ENCODE measurements at regions of chr17 and their contacts with region 1.

Region 1: GRCh38 chr17:48543107-48543853 is 1.6 kb downstream of the HOXB2 start:
- DNase-seq: peak; percentile 69
- H3K4me3 Mint-ChIP-seq: peak overlapping the region; percentile 89
- H3K27ac Mint-ChIP-seq: peak overlapping the region; percentile 95
- H3K4me1 Mint-ChIP-seq: peaks cover 55% of the 10 kb centered on the region
- H3K27me3 Mint-ChIP-seq: peaks cover 32% of the 10 kb centered on the region

Region 2: DNA sequence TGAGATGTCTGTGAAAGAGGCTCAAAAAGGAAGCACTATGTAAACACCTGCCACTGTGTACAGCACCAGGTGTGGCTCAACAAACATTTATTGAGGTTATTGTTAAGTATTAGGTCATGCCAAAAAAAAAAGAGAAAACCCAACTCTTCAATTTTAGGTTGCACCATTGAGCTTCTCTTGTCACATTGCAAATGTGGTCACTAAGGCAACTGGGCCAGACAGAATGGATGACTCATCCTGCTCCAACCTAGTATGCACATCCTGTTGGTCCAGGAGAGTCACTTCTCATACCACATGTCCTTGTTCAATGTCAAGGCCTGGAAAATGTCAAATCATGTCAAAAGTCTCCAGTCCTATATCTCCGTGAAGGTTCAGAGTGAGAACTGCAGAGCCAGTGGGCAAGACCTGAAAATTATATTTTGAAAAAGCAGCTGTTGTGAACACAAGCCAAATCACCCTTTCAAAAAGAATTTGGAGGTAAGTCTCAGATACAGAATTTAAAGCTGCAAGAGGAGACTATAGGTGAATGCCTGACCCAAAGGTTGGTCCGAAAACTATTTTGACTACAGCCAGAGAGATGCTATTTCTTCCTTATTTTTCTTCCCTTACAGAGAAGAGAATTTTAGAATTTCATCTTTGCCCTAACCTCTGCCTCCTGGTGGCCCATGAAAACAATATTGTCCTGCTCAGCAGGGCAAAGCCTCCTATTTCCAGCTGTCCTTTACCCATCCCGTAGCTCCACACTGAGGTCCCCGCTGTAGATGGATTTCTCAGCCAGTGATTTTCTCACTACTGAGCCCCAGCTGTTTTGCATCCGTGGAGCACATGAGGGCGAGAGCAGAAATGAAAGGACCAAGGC is 37.3 kb before region 1 on chr17:
- CTCF ChIA-PET with region 1: interaction called, 7 read pairs
- POLR2A ChIA-PET with region 1: interaction called, 15 read pairs
- DNase-seq: peak; percentile 74
- H3K4me3 Mint-ChIP-seq: no peak overlapping the region
- H3K27ac Mint-ChIP-seq: peak overlapping the region; percentile 71
- H3K4me1 Mint-ChIP-seq: peaks cover 49% of the 10 kb centered on the region
- H3K27me3 Mint-ChIP-seq: peaks cover 14% of the 10 kb centered on the region

Region 3: DNA sequence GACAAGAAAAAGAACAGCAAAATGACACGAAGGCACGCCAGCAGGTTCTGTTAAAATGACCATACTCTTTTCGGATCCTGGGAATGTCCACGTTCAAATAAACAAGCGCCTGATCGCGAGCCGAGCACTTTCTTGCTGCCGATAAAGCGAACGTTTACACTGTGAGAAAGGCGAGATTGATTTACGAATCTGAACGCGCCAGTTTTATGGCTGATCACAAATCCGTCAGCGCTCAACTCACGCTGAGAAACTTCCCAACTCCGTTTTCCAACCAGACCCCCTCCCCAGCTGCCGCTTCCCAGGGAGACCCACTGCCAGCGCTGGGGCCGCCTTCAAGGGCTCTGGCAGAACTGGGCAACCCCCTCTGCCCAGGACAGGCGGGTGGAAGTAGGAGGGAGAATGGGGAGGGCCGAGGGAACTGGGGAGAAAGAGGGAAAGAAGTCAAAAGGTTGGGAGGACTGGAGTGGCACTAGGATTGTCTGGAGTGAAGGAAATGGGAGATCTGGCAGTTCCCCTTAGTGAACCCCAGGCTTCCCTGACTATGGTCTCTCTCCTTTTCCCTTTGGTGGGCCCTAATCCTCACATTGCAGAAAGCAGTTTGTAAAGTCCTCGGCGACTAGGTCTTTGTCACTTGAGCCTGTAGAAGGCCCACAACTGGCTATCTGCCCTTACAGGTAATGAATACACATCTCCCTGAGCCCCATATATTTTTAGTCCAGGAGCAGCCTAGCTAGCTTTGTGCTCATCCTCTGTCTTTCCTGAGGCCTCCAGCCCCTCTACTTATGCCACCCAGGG is 27.9 kb after region 1 on chr17:
- CTCF ChIA-PET with region 1: no interaction called
- POLR2A ChIA-PET with region 1: no interaction called
- DNase-seq: no peak
- H3K4me3 Mint-ChIP-seq: no peak overlapping the region
- H3K27ac Mint-ChIP-seq: no peak overlapping the region
- H3K4me1 Mint-ChIP-seq: peaks cover 14% of the 10 kb centered on the region
- H3K27me3 Mint-ChIP-seq: peaks cover 11% of the 10 kb centered on the region